Breast epithelium (tissue), 4 donors: ENCODE measurements at regions of chr13 and their contacts with region 1.

Region 1: GRCh38 chr13:79417741-79418140 is 11.7 kb upstream of the RBM26 start:
- DNase-seq: no peak
- H3K4me3 ChIP-seq: no peak overlapping the region
- H3K27ac ChIP-seq: no peak overlapping the region
- H3K4me1 ChIP-seq: no peaks in the 10 kb centered on the region
- H3K27me3 ChIP-seq: no peaks in the 10 kb centered on the region
- CTCF ChIP-seq: no peak
- POLR2A ChIP-seq: no peak

Region 2: GRCh38 chr13:79401259-79402070 is 16.3 kb before region 1 on chr13:
- intact Hi-C with region 1: loop called (anchors 2 kb)
- DNase-seq: no peak
- H3K4me3 ChIP-seq: no peak overlapping the region
- H3K27ac ChIP-seq: peak overlapping the region in 1 of 2 donors; percentile 0
- H3K4me1 ChIP-seq: peaks cover 0 to 13% of the 10 kb centered on the region in 2 donors
- H3K27me3 ChIP-seq: no peaks in the 10 kb centered on the region
- CTCF ChIP-seq: no peak
- POLR2A ChIP-seq: no peak

Region 3: GRCh38 chr13:79435561-79435990 is 17.8 kb after region 1 on chr13:
- intact Hi-C with region 1: no loop called
- DNase-seq: no peak
- H3K4me3 ChIP-seq: no peak overlapping the region
- H3K27ac ChIP-seq: no peak overlapping the region
- H3K4me1 ChIP-seq: no peaks in the 10 kb centered on the region
- H3K27me3 ChIP-seq: no peaks in the 10 kb centered on the region
- CTCF ChIP-seq: no peak
- POLR2A ChIP-seq: no peak